Gastrocnemius medialis (tissue), 4 donors: ENCODE measurements at regions of chr15 and their contacts with region 1.

Region 1: DNA sequence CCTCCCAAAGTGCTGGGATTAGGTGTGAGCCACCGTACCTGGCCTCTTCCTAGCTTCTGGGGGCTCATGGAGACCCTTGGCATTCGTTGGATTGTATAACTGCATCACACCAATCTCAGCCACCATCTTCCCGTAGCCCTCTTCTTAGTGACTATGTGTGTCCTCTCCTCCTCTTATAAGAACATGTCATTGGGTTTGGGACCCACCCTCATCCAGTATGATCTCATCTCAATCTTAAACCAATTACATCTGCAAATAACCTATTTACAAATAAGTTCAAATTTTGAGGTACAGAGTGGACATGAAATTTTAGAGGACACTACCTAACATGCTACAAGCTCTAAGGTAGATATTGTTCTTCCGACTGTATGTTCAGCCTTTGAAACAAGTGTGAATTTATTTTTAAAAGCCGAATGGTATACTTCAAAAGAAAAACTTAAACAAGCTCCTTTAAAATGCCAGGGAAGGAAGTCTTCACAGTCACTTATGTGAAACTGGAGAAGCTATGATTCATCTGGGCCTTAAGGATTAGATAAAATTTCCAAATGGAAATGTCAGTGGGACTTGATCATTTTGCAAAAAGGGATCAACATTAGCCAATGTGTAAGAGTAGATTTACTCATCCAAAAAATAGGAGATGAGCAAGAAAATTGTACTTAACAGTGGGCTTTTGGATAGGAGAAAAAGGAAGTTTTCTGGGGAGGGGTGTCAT is 225.7 kb downstream of the MEX3B start:
- DNase-seq: no peak
- ATAC-seq: no peak
- H3K4me3 ChIP-seq: no peak overlapping the region
- H3K27ac ChIP-seq: no peak overlapping the region
- H3K4me1 ChIP-seq: no peaks in the 10 kb centered on the region
- H3K27me3 ChIP-seq: no peaks in the 10 kb centered on the region
- CTCF ChIP-seq: no peak
- POLR2A ChIP-seq: no peak

Region 2: DNA sequence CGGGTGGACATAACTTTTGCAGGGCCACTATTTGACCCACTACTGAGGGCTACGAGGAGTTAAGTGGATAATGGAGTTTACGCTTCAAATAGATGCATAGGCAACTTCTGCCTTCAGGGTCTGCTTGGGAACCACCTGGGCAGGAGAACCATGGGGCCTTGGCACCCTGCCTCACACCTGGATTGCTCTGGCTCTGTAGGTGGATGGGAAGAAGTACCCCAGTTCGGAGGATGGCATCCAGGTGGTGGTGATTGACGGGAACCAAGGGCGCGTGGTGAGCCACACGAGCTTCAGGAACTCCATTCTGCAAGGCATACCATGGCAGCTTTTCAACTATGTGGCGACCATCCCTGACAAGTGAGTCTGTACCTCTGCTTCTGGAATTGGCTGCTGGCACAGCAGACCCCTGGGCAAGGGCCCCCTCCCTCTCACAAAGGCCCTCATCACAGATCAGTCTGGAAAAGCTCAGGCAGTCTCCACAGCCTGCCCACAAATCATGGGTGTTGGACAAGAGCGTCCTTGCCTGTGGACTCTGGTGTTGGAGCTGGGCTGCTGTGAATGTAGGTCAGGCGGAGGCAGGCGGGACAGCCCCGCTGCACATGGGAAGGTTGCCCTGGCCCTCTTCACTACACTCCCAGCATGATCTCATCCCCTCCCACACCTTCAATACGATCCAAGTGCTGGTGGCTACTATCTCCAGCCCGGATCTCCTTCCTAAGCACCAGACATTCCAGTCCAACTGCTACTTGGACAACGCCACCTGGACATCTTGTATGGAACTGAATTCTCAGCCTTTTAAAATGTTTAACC is 877.1 kb before region 1 on chr15:
- in situ Hi-C with region 1: no loop called
- intact Hi-C with region 1: loop called (anchors 10 kb)
- DNase-seq: peak; percentile 18 to 36
- ATAC-seq: peak; percentile 72 to 86
- H3K4me3 ChIP-seq: no peak overlapping the region
- H3K27ac ChIP-seq: no peak overlapping the region
- H3K4me1 ChIP-seq: peaks cover 0 to 7% of the 10 kb centered on the region in 2 donors
- H3K27me3 ChIP-seq: no peaks in the 10 kb centered on the region
- CTCF ChIP-seq: no peak
- POLR2A ChIP-seq: no peak

Region 3: GRCh38 chr15:81852411-81853149 is 32.5 kb after region 1 on chr15:
- in situ Hi-C with region 1: no loop called
- intact Hi-C with region 1: no loop called
- DNase-seq: no peak
- ATAC-seq: no peak
- H3K4me3 ChIP-seq: no peak overlapping the region
- H3K27ac ChIP-seq: no peak overlapping the region
- H3K4me1 ChIP-seq: no peaks in the 10 kb centered on the region
- H3K27me3 ChIP-seq: no peaks in the 10 kb centered on the region
- CTCF ChIP-seq: no peak
- POLR2A ChIP-seq: no peak